ENCODE measurements at regions of chr5 and their contacts with region 1.

Region 1: GRCh38 chr5:67149951-67150523 is 46.6 kb downstream of the CD180 start:
- DNase-seq: no peak
- H3K4me3 Mint-ChIP-seq: no peak overlapping the region
- H3K27ac Mint-ChIP-seq: no peak overlapping the region
- H3K4me1 Mint-ChIP-seq: no peaks in the 10 kb centered on the region
- H3K27me3 Mint-ChIP-seq: no peaks in the 10 kb centered on the region
- CTCF ChIP-seq: peak; percentile 47

Region 2: DNA sequence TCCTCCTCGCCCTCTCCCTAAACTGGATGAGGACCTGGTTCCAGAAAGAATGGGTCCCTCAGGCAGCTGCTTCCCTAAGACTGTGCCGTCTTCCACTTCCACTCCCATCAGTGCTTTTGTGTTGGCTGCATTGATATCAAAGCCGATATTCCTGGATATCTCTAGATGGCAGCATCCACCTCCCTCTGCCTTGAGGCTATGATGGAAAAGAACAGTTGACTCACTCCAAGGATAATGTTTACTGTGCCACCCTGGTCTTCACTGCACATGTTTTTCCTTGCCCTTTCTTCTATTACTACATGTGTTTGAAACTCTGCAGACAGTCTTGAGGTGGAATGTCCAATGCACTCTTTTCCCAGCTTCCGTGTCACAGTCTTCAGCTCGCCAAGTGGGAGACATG is 342.3 kb before region 1 on chr5:
- CTCF ChIA-PET with region 1: interaction called, 6 read pairs
- POLR2A ChIA-PET with region 1: no interaction called
- intact Hi-C with region 1: loop called (anchors 1 kb)
- DNase-seq: peak; percentile 84
- H3K4me3 Mint-ChIP-seq: no peak overlapping the region
- H3K27ac Mint-ChIP-seq: no peak overlapping the region
- H3K4me1 Mint-ChIP-seq: peaks cover 8% of the 10 kb centered on the region
- H3K27me3 Mint-ChIP-seq: peaks cover 42% of the 10 kb centered on the region
- CTCF ChIP-seq: peak; percentile 56

Region 3: DNA sequence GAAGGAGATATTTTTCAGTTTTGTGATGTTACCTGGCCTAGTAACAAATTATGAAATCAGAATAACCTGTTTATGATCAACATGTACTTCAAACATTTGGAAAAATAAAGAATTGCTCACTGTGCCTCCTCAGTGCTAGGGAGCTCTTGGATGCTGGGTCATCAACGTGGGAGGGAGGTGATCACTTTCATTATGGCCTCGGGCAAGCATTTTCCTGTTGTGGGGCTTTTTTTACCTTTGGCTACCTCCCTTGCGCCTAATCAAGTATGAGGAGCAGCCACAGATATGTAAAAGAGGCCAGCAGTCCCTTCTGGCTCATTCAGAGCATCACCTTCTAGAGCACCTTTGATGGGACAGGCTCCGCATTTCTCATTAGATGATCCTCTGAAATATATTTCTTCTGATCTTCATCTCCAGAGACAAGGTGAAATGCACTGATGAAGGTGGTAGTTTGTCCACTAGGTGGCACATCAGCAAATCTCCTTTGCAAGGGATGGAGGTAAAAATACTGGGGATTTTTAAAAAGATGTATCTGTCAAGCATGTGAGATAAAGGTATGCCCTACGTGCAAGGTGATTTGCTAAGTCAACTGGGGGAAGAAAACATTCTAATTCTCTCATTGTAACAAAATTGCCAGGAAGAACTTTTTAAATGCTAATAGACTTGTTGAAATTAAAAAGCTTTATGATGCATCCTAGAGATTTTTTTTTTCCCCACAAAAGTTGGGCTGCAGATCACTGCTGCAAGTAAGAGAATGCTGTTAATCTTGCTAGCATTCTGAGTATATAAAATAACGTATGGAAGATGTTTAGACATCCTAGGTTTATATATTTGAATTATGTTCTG is 335.7 kb before region 1 on chr5:
- CTCF ChIA-PET with region 1: interaction called, 3 read pairs
- POLR2A ChIA-PET with region 1: interaction called, 3 read pairs
- intact Hi-C with region 1: loop called (anchors 1 kb)
- DNase-seq: peak; percentile 69
- H3K4me3 Mint-ChIP-seq: no peak overlapping the region
- H3K27ac Mint-ChIP-seq: no peak overlapping the region
- H3K4me1 Mint-ChIP-seq: peaks cover 6% of the 10 kb centered on the region
- H3K27me3 Mint-ChIP-seq: no peaks in the 10 kb centered on the region
- CTCF ChIP-seq: peak; percentile 41

Region 4: DNA sequence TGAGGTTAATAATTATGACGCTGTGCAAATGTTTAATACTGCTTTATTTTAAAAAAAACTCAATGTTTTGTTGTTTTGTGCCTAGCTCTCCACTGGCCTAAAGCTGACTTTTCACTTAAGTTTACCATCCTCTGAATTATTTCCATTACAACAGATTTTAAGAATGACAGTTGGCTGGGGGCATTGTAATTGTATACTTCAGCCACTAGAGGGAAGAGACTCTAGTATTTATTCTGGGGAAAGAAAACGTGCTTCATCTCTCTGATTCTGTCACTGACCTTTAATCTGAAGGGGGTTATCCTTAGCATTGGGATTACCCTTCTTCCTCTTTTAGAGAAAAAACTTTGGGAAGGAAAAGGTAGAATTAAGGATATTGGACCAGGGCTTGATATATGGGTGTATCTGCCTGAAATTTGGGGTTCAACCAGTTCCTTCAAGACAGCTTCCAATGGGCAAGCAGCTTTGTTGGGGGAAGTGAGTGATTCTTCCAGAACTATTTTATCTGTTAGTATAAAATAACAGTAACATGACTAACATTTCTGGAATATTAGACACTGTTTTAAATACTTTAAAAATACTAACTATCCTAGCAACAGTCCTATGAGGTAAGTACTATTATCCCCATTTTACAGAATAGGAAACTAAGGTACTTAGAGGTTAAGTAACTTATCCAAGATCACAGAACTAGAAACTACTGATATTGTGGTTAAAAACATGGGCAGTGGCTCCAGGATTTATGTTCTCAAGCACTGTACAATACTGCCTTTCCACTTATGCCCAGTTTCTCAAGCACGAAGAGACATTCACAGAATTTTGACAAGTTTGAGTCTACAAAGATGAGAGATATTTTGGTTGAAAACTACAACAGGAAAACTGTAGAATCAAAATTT is 161.8 kb before region 1 on chr5:
- CTCF ChIA-PET with region 1: interaction called, 5 read pairs
- POLR2A ChIA-PET with region 1: no interaction called
- intact Hi-C with region 1: loop called (anchors 1 kb)
- DNase-seq: peak; percentile 48
- H3K4me3 Mint-ChIP-seq: no peak overlapping the region
- H3K27ac Mint-ChIP-seq: no peak overlapping the region
- H3K4me1 Mint-ChIP-seq: peaks cover 5% of the 10 kb centered on the region
- H3K27me3 Mint-ChIP-seq: no peaks in the 10 kb centered on the region
- CTCF ChIP-seq: peak; percentile 54

Region 5: DNA sequence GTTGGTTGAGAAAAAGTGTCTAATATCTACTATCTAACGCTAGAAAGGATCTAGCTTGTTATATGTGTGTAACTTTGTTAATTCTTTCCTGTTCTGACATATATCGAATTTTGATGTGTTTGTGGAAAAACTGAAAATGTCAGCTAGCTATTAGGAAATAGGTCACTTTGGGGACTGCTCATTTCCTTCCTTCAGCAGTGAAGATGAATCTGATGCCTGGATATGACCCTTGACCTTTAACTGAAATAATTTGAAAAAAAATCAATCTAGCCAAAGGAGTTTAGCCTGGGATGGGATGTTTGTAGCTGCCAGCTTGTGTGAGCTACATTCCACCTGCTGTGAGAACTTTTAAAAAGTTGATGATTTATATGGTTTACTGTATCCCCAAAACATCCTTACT is 20.3 kb before region 1 on chr5:
- CTCF ChIA-PET with region 1: interaction called, 10 read pairs
- POLR2A ChIA-PET with region 1: no interaction called
- intact Hi-C with region 1: no loop called
- DNase-seq: no peak
- H3K4me3 Mint-ChIP-seq: no peak overlapping the region
- H3K27ac Mint-ChIP-seq: no peak overlapping the region
- H3K4me1 Mint-ChIP-seq: no peaks in the 10 kb centered on the region
- H3K27me3 Mint-ChIP-seq: no peaks in the 10 kb centered on the region
- CTCF ChIP-seq: no peak